ENCODE measurements at regions of chr9 and their contacts with region 1.

Region 1: GRCh38 chr9:116377479-116377779 is 223.8 kb downstream of the PAPPA start:
- DNase-seq: no peak
- H3K4me3 ChIP-seq: no peak overlapping the region
- H3K27ac ChIP-seq: peak overlapping the region in 2 of 4 donors; percentile 19 to 27
- H3K4me1 ChIP-seq: peaks cover 0 to 12% (median 1%) of the 10 kb centered on the region in 4 donors
- H3K27me3 ChIP-seq: no peaks in the 10 kb centered on the region
- CTCF ChIP-seq: no peak
- EP300 ChIP-seq: no peak
- POLR2A ChIP-seq: no peak

Region 2: DNA sequence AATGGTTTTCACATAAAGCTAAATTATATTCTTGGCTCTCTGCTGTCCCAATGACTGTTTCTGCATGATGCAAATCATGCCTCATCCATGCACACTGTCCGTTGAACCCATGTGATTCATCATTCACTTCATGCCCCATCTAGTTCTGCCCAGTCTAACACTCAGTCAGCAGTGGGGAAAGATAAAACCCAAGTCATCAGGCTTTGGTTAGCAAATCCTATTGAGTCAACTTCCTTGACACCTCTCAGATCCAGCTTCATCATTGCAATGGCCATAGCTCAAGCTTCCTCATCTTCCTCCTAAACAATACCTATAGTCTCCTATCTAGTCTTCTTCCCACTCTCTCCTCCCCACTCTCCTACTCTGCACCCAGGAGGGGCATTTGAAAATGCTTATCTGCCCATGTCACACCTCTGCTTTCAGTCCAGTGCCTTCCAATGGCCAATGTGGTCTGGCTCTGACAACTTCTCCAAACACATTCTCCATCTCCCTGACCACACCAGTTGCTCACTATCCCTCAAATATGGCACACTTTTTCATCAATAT is 43.6 kb after region 1 on chr9:
- intact Hi-C with region 1: no loop called
- DNase-seq: no peak
- H3K4me3 ChIP-seq: no peak overlapping the region
- H3K27ac ChIP-seq: no peak overlapping the region
- H3K4me1 ChIP-seq: no peaks in the 10 kb centered on the region
- H3K27me3 ChIP-seq: no peaks in the 10 kb centered on the region
- CTCF ChIP-seq: no peak
- EP300 ChIP-seq: no peak
- POLR2A ChIP-seq: no peak

Region 3: DNA sequence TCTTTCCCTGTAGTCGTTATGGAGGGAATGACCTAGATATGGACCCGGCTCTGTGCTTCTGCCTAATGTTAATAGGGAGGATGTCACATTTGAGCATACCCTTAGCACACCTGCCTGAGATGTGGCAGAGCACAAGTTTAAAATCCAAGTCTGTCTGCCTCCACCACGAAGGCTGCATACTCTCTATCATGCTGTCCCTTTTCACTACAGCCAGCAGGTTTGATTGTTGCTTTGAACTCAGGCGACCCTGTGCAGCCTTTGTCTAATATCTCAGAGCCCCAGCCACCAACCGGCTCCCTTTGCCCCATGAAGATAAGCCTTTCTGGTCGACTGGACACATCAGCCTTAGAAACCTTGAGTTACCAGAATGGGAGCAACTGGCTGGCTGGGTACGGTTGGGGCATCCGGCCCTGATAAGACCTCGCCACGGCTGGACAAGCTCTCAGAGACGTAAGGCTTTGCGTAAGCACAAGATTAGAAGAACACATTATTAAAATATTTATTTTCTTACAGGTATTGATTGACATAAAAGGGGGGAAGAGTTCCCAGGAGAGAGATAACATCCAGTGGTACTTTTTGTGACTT is 87.7 kb after region 1 on chr9:
- intact Hi-C with region 1: loop called (anchors 10 kb)
- DNase-seq: no peak
- H3K4me3 ChIP-seq: no peak overlapping the region
- H3K27ac ChIP-seq: no peak overlapping the region
- H3K4me1 ChIP-seq: no peaks in the 10 kb centered on the region
- H3K27me3 ChIP-seq: no peaks in the 10 kb centered on the region
- CTCF ChIP-seq: no peak
- EP300 ChIP-seq: no peak
- POLR2A ChIP-seq: no peak

Region 4: DNA sequence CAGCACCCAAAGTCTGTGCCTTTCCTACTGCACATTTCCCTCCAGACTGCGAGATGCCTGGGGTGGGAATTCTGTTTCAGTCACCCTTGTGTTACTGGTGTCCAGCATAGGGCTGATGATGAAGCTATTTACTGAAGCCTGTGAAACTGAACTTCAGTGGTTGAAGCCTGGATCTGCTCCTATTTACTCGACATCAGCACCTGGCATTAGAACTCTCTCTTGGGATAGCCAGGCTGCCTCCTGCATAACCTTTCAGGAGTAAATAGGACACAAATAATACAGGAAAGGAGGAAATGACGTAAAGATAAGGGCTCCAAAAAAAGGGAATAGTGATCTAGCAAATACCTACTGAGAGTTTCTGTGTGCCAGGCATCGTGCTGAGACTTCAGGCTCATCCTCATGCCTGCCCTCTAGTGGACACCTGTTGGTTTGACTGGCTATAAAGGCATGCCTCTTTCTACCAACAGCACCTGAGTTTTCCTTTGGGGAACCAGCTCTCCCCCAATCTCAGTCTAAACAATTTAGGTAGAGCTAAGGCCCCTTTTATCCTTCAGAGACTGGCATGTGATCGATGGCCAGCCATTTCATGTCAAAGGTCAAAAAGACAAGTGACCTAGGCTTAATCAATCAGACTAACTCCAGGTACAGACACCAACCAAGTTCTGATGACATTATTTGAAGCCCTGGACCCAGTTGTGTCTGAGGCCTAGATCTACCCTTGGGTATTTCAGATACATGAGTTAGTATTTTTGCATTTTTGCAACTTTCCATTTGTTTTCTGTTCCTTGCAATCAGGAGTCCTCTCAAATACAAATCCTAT is 117.6 kb after region 1 on chr9:
- intact Hi-C with region 1: no loop called
- DNase-seq: no peak
- H3K4me3 ChIP-seq: no peak overlapping the region
- H3K27ac ChIP-seq: no peak overlapping the region
- H3K4me1 ChIP-seq: peaks cover 0 to 7% (median 0%) of the 10 kb centered on the region in 4 donors
- H3K27me3 ChIP-seq: no peaks in the 10 kb centered on the region
- CTCF ChIP-seq: peak; percentile 8 to 48 (median 44)
- EP300 ChIP-seq: no peak
- POLR2A ChIP-seq: no peak